ENCODE measurements at regions of chr18 and their contacts with region 1.

Region 1: DNA sequence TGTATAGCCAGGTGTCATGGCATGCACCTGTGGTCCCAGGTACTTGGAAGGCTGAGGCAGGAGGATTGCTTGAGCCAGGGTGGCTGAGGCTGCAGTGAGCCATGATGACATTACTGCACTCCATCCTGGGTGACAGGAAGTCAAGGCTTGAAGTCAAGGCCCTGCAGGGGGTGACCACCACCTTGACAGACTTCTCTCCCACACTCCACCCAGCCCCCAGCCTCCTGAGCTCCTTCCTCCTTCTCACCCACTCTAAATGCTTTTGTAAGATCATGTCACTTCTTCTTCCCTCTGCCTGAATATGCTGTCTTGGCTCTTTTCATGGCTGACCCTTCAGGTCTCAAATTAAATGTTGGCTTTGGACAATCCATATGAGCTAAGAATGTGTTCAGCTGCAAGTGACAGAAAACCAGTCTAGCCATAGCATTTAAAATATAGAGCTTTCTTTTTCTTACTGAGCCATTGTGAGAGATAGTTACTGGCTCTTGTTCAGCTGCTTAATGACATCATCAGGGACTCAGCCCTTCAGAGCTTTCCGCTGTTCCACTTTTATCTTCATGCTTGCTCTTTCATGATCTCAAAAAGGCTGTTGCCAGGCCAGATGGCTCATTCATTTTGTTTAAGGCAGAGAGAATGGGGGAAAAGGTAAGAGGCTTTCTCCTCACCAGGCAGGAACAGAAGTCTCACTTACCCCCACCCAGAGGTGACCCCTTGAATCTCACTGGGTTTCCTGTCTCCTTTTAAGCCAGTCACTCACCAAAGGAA is 36.7 kb upstream of the TTC39C start:
- DNase-seq: no peak
- H3K4me3 Mint-ChIP-seq: no peak overlapping the region
- H3K27ac Mint-ChIP-seq: peak overlapping the region; percentile 47
- H3K4me1 Mint-ChIP-seq: peaks cover 16% of the 10 kb centered on the region
- H3K27me3 Mint-ChIP-seq: peaks cover 12% of the 10 kb centered on the region

Region 2: DNA sequence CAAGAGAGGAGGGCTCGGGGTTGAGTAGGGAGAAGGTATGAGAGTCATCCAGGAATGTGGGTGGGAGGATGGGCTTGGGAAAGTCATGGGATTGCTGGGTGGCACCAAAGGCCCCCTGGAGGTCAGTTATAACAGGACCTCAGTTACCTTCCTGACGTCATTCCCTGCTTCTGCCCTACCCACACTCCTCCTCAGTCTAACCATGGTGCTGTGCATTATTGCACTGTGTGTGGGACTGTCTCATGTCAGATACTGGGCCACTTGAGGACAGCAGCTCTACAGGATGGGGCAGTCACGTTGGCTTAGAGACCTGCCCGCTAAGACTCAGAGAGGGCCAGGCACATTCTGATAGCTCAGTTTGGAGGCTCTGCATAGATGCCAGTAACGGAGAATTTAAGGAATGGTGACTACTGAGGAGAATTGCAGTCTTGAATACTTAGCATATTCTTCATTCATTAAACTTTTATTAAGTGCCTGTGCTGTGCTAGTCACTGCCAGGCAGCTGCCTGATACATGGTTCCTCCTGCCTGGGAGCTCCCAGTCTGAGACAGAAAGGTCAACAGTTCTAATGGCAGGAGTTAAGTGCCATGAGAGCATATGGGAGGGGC is 198.1 kb before region 1 on chr18:
- CTCF ChIA-PET with region 1: no interaction called
- POLR2A ChIA-PET with region 1: no interaction called
- DNase-seq: no peak
- H3K4me3 Mint-ChIP-seq: no peak overlapping the region
- H3K27ac Mint-ChIP-seq: no peak overlapping the region
- H3K4me1 Mint-ChIP-seq: no peaks in the 10 kb centered on the region
- H3K27me3 Mint-ChIP-seq: peaks cover 7% of the 10 kb centered on the region

Region 3: GRCh38 chr18:23967321-23968089 is 10.4 kb before region 1 on chr18:
- CTCF ChIA-PET with region 1: interaction called, 11 read pairs
- POLR2A ChIA-PET with region 1: no interaction called
- DNase-seq: peak; percentile 35
- H3K4me3 Mint-ChIP-seq: no peak overlapping the region
- H3K27ac Mint-ChIP-seq: peak overlapping the region; percentile 48
- H3K4me1 Mint-ChIP-seq: peaks cover 58% of the 10 kb centered on the region
- H3K27me3 Mint-ChIP-seq: no peaks in the 10 kb centered on the region

Region 4: GRCh38 chr18:23994361-23994902 is 16.5 kb after region 1 on chr18:
- CTCF ChIA-PET with region 1: interaction called, 12 read pairs
- POLR2A ChIA-PET with region 1: no interaction called
- DNase-seq: no peak
- H3K4me3 Mint-ChIP-seq: no peak overlapping the region
- H3K27ac Mint-ChIP-seq: no peak overlapping the region
- H3K4me1 Mint-ChIP-seq: peaks cover 39% of the 10 kb centered on the region
- H3K27me3 Mint-ChIP-seq: no peaks in the 10 kb centered on the region

Region 5: DNA sequence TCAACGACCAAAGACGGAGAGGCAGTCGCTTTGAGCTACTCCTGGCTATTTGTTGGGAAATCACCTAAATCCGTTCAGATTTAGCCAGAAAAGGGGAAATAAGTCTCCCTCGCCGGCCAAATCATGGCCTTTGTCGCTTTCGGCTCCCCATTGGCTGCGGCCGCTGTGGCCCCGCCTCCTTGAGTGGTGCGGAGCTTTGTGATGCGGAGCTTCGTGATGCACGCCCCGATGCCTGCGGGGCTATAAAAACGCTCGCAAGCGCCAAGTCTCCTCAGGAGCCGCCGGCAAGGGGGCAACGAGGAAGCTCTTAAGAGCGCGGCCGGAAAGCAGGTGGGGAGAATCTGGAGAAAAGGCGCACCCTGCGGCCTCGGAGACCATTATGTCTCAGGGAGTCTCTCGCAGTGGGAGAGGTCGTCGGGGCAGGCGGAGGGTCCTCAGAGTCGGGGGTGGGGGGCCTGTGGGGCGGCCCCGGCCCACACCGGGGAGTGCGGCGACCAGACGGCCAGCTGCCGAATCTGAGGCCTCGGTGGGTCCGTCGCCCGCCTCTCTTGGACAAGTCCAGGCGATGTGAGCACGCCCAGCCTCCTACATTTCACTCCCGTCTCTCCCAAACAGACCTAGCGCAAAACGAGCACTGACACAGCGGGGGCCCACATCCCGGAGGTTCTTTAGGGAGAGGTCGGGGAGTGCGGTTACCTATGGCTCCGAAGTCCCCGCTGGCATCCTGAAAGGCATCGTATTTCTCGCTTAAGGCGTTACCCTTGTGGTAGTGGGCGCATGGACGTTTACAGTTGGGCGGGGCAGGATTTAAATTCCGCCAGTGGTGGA is 161.1 kb after region 1 on chr18 and contains the start of gene CABYR:
- CTCF ChIA-PET with region 1: no interaction called
- POLR2A ChIA-PET with region 1: no interaction called
- DNase-seq: peak; percentile 62
- H3K4me3 Mint-ChIP-seq: peak within 1 kb of the TSS; percentile 77
- H3K27ac Mint-ChIP-seq: peak within 1 kb of the TSS; percentile 76
- H3K4me1 Mint-ChIP-seq: peaks cover 33% of the 10 kb centered on the region
- H3K27me3 Mint-ChIP-seq: peaks cover 28% of the 10 kb centered on the region
- total RNA-seq, gene CABYR: 1.3 TPM